HepG2 (cell line): ENCODE measurements at regions of chr3 and their contacts with region 1.

Region 1: DNA sequence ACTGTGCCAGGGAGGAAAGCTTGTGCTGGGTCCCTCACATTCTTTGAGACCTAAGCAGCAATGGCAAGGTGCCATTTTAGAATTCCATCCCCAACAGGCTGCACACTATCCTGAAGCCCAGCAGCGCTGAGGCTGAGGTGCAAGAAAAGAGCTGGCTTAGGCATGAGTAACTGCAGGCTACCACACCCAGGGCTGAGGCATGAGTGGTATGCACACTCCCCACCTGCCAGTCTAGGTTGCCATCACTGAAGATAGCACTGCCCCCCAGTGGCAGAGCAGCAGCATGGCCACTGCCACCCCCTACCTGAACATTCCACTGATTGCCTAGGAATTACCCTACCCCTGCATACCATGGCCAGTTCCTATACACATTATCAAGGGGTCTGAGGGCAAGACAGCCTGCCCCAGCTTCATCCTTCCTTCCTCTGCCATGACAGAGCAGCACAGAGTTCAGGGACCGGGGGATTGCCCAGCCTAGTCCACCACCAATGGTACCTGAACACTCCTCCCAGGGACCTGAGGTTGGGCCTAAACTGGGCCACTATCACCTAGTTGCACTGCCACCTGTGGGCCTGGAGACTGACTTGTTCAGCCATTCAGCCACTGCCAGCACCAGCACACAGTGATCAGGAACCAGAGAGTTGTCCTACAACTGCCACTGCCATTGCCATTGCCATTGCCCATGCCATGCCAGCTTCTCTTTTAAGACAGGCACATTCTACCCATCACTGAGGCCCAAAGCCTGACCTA is 129.8 kb downstream of the SATB1 start:
- DNase-seq: peak; percentile 21
- ATAC-seq: peak; percentile 97
- H3K4me3 ChIP-seq: no peak overlapping the region
- H3K27ac ChIP-seq: no peak overlapping the region
- H3K4me1 ChIP-seq: no peaks in the 10 kb centered on the region
- H3K27me3 ChIP-seq: no peaks in the 10 kb centered on the region
- CTCF ChIP-seq: peak; percentile 51
- EP300 ChIP-seq: no peak
- POLR2A ChIP-seq: no peak
- RAD21 ChIP-seq: no peak

Region 2: DNA sequence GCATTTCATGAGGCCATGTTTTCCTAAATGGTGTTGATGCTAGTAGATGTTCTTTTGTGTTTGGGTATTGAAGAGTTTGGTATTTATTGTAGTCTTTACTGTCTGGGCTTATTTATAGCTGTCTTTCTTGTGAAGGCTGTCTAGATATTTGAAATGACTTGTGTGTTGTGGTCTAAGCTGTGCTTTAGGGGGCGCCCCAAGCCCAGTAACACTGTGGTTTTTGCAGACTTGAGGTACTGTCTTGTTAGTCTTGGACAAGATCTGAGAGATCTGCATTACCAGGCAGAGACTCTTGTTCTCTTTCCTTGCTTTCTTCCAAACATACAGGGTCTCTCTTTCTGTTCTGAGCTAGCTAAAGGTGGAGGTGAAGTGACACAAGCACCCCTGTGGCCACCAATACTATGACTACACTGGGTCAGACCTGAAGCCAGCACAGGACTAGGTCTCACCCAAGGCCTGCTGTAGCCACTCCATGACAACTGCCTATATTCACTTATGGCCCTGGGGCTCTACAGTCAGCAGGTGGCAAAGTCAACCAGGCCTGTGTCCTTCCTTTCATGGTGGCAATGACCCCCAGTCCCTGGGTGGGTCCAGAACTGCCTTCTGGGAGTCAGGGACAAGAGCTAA is 400.8 kb before region 1 on chr3:
- CTCF ChIA-PET with region 1: no interaction called
- POLR2A ChIA-PET with region 1: no interaction called
- in situ Hi-C with region 1: no loop called
- intact Hi-C with region 1: loop called (anchors 10 kb)
- DNase-seq: peak; percentile 5
- ATAC-seq: peak; percentile 60
- H3K4me3 ChIP-seq: no peak overlapping the region
- H3K27ac ChIP-seq: no peak overlapping the region
- H3K4me1 ChIP-seq: no peaks in the 10 kb centered on the region
- H3K27me3 ChIP-seq: no peaks in the 10 kb centered on the region
- CTCF ChIP-seq: peak; percentile 54
- EP300 ChIP-seq: no peak
- POLR2A ChIP-seq: no peak
- RAD21 ChIP-seq: no peak

Region 3: GRCh38 chr3:18351823-18352744 is 56.7 kb after region 1 on chr3:
- CTCF ChIA-PET with region 1: no interaction called
- POLR2A ChIA-PET with region 1: no interaction called
- in situ Hi-C with region 1: no loop called
- intact Hi-C with region 1: no loop called
- DNase-seq: no peak
- ATAC-seq: no peak
- H3K4me3 ChIP-seq: no peak overlapping the region
- H3K27ac ChIP-seq: no peak overlapping the region
- H3K4me1 ChIP-seq: no peaks in the 10 kb centered on the region
- H3K27me3 ChIP-seq: peaks cover 0 to 13% of the 10 kb centered on the region in 2 experiments; a peak in 1 of 5 replicates
- CTCF ChIP-seq: no peak
- EP300 ChIP-seq: no peak
- POLR2A ChIP-seq: no peak
- RAD21 ChIP-seq: no peak

Region 4: DNA sequence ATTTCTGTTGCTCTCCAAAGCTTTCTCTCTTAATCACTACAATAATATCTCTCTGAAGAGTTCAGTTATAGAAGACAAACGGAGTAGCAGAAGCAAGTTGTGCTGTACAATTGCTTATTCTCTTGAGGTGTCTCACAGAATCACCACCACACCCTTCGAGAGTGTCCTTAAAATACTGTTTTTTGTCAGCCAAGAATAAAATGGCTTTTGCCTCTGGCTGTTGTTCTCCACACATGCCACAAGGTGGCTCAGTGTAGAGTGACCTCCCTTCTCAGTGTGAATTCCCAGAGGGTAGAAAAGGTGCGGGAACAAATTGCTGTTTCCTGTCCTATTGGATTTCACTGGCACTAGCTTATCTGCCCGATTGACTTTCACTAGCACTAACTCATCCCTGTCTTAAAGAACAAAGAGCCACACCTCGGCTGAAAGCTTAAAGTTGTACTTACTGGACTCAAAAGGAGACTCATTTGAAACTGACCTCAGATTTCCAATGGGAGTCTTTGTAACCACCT is 264.0 kb after region 1 on chr3:
- CTCF ChIA-PET with region 1: no interaction called
- POLR2A ChIA-PET with region 1: no interaction called
- in situ Hi-C with region 1: no loop called
- intact Hi-C with region 1: no loop called
- DNase-seq: peak; percentile 9
- ATAC-seq: peak; percentile 73
- H3K4me3 ChIP-seq: no peak overlapping the region
- H3K27ac ChIP-seq: no peak overlapping the region
- H3K4me1 ChIP-seq: no peaks in the 10 kb centered on the region
- H3K27me3 ChIP-seq: no peaks in the 10 kb centered on the region
- CTCF ChIP-seq: peak; percentile 62
- EP300 ChIP-seq: no peak
- POLR2A ChIP-seq: no peak
- RAD21 ChIP-seq: no peak